ENCODE measurements at regions of chr14 and their contacts with region 1.

Region 1: DNA sequence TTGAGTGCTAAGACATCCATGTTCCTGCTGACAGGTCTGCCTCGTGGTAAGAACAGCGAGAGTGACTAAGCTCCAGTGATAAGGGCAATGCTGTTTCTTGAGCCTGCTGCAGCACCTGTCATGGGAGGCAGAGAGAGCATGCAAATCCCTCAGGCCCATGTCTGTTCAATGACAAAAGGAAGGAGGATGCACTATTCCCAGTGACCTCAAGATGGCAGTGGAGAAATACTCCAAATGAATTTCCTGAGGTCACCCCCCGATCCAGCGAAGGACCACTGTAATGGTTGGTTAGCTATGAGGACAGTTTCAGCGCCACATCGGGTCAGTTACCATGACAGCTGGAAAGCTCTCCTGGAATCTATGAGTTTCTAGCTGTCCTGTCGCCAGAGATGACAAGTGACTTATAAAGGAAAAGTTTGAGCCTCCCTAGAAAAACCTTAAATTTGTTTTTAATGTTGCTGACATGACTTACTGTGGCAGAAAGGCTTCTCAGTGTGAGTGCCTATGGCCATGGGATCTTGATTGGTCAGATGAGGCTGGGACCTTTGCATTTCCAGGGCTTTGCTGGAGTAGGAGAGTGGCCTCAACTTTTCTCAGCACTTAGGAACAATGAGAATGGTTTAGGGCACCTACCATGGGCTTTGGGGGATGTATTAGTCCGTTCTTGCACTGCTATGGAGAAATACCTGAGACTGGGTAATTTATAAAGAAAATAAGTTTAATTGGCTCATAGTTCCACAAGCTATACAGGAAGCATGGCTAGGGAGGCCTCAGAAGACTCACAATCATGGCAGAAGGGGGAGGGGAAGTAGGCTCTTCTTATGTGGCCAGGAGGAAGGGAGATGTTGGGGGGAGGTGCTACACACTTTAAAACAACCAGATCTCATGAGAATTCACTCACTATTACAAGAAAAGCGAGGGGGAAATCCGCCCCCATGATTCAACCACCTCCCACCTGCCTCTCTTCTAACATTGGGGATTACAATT is 88.0 kb upstream of the TMEM260 start:
- DNase-seq: peak; percentile 25
- H3K4me3 Mint-ChIP-seq: no peak overlapping the region
- H3K27ac Mint-ChIP-seq: no peak overlapping the region
- H3K4me1 Mint-ChIP-seq: peaks cover 7% of the 10 kb centered on the region
- H3K27me3 Mint-ChIP-seq: no peaks in the 10 kb centered on the region

Region 2: DNA sequence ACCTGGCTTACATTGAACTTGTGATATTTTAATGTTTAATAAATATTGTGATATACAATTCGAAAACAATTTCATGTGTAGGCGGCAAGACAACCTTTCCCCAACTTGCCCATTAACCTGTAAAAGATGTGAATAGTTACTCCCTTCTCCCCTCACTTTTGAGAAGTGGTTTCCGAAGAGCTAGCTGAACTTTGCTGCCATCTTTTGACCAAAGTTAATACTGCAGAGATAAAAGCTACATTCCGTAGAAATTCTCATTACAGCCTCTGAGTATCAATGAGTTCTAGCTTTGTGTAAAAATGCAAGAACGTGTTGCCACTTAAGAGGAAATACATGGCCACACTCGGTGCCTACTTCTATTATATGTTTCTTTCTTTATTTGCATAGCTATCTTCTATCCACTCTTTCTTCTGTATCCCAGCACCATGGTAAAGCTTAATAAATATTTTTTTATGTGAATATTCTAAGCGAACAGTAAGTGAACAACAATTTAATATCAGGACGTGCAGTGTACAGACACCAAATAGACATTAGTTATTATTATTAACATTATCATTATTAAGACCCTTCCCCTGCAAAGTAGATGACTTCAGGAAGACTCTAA is 17.1 kb before region 1 on chr14:
- CTCF ChIA-PET with region 1: interaction called, 18 read pairs
- POLR2A ChIA-PET with region 1: no interaction called
- intact Hi-C with region 1: no loop called
- DNase-seq: no peak
- H3K4me3 Mint-ChIP-seq: no peak overlapping the region
- H3K27ac Mint-ChIP-seq: no peak overlapping the region
- H3K4me1 Mint-ChIP-seq: no peaks in the 10 kb centered on the region
- H3K27me3 Mint-ChIP-seq: peaks cover 2% of the 10 kb centered on the region

Region 3: DNA sequence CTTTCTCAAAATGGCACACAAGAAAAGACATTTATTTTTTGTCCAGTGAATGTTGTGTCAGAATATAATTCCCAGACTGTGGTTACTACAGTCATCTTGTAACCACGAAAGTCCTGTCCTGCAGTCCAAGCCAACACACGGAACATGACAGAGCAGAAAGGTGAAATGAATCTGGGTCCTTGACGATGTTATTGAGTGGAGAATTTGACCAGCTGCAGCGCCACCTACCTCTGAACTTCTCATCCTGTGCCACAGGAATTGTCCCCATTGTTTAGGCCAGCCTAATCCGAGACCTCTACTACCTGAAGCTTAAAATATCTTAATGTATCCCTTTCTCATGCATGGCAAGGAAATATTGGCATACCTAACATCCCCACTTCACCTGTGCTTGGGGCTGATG is 382.8 kb after region 1 on chr14:
- CTCF ChIA-PET with region 1: interaction called, 3 read pairs
- POLR2A ChIA-PET with region 1: no interaction called
- intact Hi-C with region 1: loop called (anchors 5 kb)
- DNase-seq: peak; percentile 9
- H3K4me3 Mint-ChIP-seq: no peak overlapping the region
- H3K27ac Mint-ChIP-seq: no peak overlapping the region
- H3K4me1 Mint-ChIP-seq: no peaks in the 10 kb centered on the region
- H3K27me3 Mint-ChIP-seq: peaks cover 4% of the 10 kb centered on the region

Region 4: GRCh38 chr14:57182760-57183503 is 691.3 kb after region 1 on chr14:
- CTCF ChIA-PET with region 1: interaction called, 23 read pairs
- POLR2A ChIA-PET with region 1: no interaction called
- intact Hi-C with region 1: no loop called
- DNase-seq: no peak
- H3K4me3 Mint-ChIP-seq: no peak overlapping the region
- H3K27ac Mint-ChIP-seq: no peak overlapping the region
- H3K4me1 Mint-ChIP-seq: no peaks in the 10 kb centered on the region
- H3K27me3 Mint-ChIP-seq: peaks cover 8% of the 10 kb centered on the region

Region 5: DNA sequence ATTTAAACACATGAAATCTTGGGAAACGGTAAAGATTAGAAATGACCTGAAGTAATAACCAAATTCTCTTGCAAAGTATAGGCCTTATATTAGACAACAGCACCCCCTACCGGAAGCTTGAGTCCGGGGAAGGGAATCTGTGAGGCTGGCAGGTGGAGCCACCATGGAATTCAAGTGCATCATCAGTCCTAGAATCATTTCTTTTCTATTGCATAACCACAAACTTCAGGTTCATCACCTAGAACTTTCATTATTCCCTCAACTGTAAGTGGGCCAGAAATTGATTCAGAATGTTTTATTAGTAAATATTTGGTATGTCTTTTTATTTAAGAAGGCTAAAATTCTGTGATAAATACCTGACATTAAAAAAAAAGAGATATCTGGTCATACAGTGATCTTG is 825.7 kb after region 1 on chr14:
- CTCF ChIA-PET with region 1: interaction called, 40 read pairs
- POLR2A ChIA-PET with region 1: no interaction called
- intact Hi-C with region 1: loop called (anchors 1 kb)
- DNase-seq: peak; percentile 73
- H3K4me3 Mint-ChIP-seq: no peak overlapping the region
- H3K27ac Mint-ChIP-seq: no peak overlapping the region
- H3K4me1 Mint-ChIP-seq: peaks cover 3% of the 10 kb centered on the region
- H3K27me3 Mint-ChIP-seq: no peaks in the 10 kb centered on the region